ENCODE measurements at regions of chr5 and their contacts with region 1.

Region 1: GRCh38 chr5:30981576-30981975 is 211.9 kb upstream of the CDH6 start:
- DNase-seq: no peak
- H3K4me3 ChIP-seq: no peak overlapping the region
- H3K27ac ChIP-seq: no peak overlapping the region
- H3K4me1 ChIP-seq: no peaks in the 10 kb centered on the region
- H3K27me3 ChIP-seq: no peaks in the 10 kb centered on the region
- CTCF ChIP-seq: no peak

Region 2: DNA sequence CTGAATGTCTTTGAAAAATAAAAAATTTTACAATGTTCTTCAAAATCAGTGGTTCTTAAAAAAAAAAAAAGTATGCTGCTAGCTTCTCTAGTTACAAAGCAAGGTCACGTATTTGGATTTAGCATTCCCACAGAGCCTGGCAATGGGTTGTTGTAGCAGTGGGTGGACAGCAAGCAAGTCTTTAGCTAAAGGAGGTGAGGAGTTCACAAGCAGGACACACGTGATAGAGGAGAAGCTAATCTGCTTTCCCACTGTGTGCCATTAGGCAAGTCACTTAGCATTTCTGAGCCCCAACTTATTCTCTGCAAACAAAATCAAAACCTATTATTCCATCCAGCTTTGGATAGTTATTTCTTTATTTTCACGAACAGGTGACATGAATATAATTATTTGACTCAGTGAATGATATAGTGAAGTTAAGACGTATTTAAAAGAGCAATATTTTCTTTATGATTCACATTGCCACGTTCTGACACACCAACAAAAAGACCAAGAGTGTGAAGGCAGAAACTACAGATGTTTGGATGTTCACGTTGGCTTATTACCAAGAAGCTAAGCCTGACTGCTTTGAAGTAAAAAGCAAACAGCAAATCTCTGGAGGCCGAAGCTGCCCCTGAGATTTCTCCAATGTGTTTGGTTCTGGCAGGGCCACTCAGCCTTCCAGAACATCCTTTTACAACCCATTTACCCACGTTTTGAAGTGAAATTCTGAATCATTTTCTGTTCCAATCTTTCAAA is 400.2 kb before region 1 on chr5:
- CTCF ChIA-PET with region 1: no interaction called
- POLR2A ChIA-PET with region 1: no interaction called
- intact Hi-C with region 1: no loop called
- DNase-seq: no peak
- H3K4me3 ChIP-seq: no peak overlapping the region
- H3K27ac ChIP-seq: no peak overlapping the region
- H3K4me1 ChIP-seq: no peaks in the 10 kb centered on the region
- H3K27me3 ChIP-seq: no peaks in the 10 kb centered on the region
- CTCF ChIP-seq: no peak

Region 3: DNA sequence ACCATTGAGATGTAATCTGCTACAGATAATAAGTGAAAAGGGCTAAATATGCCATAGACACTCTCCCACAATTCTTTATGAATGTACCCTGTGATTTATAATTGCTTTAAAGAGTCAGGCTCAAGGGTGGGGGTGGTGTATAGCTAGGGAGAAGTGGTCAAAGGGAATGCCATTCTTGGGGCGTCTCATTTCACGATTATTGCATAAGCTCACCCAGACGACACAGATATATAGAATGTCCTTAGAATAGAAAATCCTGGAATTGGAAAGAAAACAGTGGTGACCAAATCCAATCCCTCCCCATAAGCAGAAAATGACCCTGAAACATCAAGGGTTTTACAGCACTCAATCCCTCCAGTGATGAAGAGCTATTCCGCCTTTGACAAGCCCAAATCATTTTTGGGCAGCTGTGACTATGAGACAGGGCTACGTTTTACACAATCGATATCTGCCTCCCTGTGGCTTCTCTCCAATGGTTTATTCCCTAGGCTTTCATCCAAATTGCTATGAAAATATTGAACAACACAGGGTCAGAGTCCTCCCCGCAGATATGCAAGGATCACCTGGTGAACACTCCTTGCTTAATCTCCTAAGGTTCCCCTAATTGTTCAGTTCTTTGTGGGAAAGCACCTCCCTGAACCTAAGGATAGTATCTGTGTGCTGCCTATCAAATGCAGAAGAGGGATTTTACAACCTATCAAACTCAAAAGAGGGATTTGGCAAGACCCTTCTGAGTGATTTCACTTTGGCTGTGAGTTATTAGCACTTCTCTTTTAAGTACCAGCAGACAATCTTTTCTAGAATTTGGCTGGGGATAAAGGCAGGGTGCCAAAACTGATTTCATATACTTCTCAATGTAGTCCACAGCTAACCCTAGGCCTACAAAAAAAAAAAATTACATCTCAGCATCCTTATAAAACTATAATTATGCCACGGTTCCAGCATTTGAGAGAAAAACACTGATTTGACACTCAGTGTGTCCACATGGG is 67.0 kb after region 1 on chr5:
- CTCF ChIA-PET with region 1: no interaction called
- POLR2A ChIA-PET with region 1: no interaction called
- intact Hi-C with region 1: loop called (anchors 10 kb)
- DNase-seq: no peak
- H3K4me3 ChIP-seq: no peak overlapping the region
- H3K27ac ChIP-seq: no peak overlapping the region
- H3K4me1 ChIP-seq: no peaks in the 10 kb centered on the region
- H3K27me3 ChIP-seq: no peaks in the 10 kb centered on the region
- CTCF ChIP-seq: no peak

Measured in PC-9 (cell line).